Panc1 (cell line): ENCODE measurements at regions of chr7 and their contacts with region 1.

Region 1: DNA sequence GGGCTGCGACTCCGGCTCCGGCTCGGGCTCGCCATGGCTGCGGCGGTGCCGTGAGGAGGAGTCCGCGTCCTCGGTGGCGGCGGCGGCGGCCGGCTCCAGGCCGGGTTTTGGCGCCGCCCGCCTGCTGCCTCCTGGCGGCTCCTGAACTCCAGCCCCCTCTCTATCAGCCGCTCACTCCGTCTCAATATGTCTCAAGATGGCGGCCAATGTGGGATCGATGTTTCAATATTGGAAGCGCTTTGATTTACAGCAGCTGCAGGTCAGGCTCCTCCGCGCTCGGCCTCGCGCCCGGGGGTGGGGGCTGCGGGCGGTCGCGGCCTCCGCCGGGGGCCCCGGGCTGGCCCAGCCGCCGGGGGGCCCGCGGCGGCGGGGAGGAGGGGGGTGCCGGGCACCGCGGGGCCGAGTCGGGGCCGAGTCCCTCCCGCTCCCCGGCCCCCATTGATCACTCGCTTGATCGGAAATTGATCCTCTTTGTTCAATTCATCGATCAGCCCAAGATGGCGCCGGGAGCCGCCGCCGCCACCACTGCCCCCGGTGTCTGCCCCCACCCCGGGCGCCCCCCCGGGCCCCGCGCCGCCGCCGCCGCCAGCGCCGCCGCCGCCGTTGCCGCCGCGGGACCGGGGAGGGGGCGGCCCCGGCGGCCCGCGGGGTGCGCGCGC is 1.5 kb upstream of the CUX1 start:
- DNase-seq: no peak
- ATAC-seq: peak; percentile 82
- H3K4me3 ChIP-seq: peak overlapping the region; percentile 60 to 66
- H3K27ac ChIP-seq: no peak overlapping the region
- H3K4me1 ChIP-seq: peaks cover 28% of the 10 kb centered on the region
- H3K27me3 ChIP-seq: no peaks in the 10 kb centered on the region
- CTCF ChIP-seq: peak; percentile 68

Region 2: GRCh38 chr7:101232141-101232850 is 583.7 kb before region 1 on chr7:
- CTCF ChIA-PET with region 1: no interaction called
- POLR2A ChIA-PET with region 1: no interaction called
- in situ Hi-C with region 1: no loop called
- intact Hi-C with region 1: no loop called
- DNase-seq: no peak
- ATAC-seq: peak; percentile 75
- H3K4me3 ChIP-seq: peak overlapping the region; percentile 42 to 55
- H3K27ac ChIP-seq: peak overlapping the region; percentile 49
- H3K4me1 ChIP-seq: peaks cover 6% of the 10 kb centered on the region; the same call in 1 of the 2 replicates
- H3K27me3 ChIP-seq: no peaks in the 10 kb centered on the region
- CTCF ChIP-seq: no peak

Region 3: DNA sequence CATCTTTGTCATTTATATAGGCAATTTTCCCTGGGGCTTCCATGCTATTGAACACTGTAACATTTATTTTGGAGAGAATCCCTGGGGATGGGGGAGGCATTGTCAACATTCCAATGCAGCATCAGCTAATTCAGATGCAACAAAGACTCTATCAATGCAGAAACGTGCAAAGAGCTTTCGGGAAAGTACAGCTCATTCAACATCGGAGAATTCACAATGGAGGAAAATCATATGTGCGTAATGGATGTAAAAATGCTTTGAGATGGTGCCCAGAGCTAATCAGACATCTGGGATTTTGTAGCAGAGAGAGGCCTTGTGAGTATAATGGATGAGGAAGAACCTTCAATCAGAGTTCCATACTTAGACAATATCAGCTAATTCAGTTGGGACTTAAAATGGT is 542.8 kb before region 1 on chr7:
- CTCF ChIA-PET with region 1: no interaction called
- POLR2A ChIA-PET with region 1: no interaction called
- in situ Hi-C with region 1: no loop called
- intact Hi-C with region 1: no loop called
- DNase-seq: no peak
- ATAC-seq: no peak
- H3K4me3 ChIP-seq: no peak overlapping the region
- H3K27ac ChIP-seq: no peak overlapping the region
- H3K4me1 ChIP-seq: no peaks in the 10 kb centered on the region
- H3K27me3 ChIP-seq: no peaks in the 10 kb centered on the region
- CTCF ChIP-seq: no peak

Region 4: DNA sequence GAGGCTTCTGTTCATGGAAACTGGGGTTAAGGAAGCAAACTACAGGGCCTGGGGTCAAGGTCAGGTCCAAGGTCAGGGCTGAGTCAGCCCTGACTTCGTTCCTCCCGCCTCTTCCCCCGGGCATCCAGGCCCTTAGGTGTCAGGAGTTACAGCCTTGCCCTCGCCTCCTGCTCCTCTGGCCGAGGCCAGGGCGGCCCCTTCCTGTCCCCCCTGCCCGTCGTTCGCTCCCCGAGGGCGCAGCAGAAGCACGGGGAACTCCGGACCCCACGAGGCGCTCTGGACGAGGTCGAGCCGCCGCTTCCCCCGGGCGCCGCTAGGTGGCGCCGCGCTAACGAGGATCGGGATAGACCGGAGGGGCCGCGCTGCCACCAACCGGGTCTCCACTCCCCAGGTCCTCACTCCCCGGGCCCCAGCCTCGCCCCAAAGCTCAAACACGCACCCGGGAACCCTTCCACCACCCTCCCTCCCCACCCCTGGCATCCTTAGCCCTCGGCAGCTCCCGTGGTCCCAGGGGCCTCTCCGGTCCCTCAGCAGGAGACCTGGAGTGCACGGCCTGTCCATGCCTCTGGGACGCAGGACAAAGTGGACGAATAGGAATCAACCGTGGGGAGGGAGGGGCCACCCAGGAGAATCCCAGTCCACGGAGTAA is 127.7 kb before region 1 on chr7:
- CTCF ChIA-PET with region 1: interaction called, 4 read pairs
- POLR2A ChIA-PET with region 1: interaction called, 21 read pairs
- in situ Hi-C with region 1: no loop called
- intact Hi-C with region 1: loop called (anchors 1 kb)
- DNase-seq: no peak
- ATAC-seq: peak; percentile 95
- H3K4me3 ChIP-seq: peak overlapping the region; percentile 31 to 49
- H3K27ac ChIP-seq: peak overlapping the region; percentile 69
- H3K4me1 ChIP-seq: peaks cover 7% of the 10 kb centered on the region; the same call in 1 of the 2 replicates
- H3K27me3 ChIP-seq: no peaks in the 10 kb centered on the region
- CTCF ChIP-seq: peak; percentile 98

Region 5: DNA sequence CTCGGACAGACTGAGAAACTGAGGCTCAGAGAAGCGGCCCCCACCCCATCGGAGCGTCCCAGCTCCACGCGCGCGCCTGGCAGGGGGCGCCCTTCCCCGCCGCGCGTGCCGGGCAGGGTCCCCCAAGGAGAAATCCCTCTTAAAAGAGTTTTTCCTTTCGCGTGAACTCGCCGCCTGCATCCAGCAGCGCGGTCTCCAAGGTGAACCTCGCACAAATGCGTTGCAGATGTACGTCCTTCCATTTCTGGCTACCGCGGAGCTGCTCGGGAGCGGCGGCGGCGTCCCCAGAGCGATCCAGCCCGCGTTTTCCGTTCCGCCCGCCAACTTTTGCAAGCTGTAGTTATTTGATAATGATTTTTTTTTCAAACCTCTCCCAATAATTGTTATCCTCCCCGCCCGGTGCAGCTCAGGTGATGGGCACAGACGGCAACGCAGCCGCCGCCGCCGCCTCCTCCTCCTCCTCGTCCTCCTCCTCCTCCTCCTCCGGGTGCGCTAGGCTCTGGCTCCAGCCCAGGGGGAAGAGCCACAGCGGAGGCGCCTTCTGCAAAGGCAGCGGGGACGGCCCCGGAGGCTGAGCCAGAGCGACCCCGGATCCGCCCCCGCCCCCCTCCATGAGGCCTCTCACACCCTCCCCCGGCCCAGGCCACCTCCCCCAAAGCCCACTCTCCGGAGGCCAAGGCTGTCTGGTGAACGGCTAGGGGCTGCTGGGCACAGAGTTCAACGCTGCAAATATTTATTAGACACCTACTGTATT is 72.5 kb before region 1 on chr7:
- CTCF ChIA-PET with region 1: no interaction called
- POLR2A ChIA-PET with region 1: no interaction called
- in situ Hi-C with region 1: no loop called
- intact Hi-C with region 1: loop called (anchors 2 kb)
- DNase-seq: no peak
- ATAC-seq: peak; percentile 83
- H3K4me3 ChIP-seq: peak overlapping the region; percentile 48 to 62
- H3K27ac ChIP-seq: peak overlapping the region; percentile 71
- H3K4me1 ChIP-seq: peaks cover 35% of the 10 kb centered on the region
- H3K27me3 ChIP-seq: no peaks in the 10 kb centered on the region
- CTCF ChIP-seq: peak; percentile 87; the same call in 1 of the 2 replicates

Region 6: DNA sequence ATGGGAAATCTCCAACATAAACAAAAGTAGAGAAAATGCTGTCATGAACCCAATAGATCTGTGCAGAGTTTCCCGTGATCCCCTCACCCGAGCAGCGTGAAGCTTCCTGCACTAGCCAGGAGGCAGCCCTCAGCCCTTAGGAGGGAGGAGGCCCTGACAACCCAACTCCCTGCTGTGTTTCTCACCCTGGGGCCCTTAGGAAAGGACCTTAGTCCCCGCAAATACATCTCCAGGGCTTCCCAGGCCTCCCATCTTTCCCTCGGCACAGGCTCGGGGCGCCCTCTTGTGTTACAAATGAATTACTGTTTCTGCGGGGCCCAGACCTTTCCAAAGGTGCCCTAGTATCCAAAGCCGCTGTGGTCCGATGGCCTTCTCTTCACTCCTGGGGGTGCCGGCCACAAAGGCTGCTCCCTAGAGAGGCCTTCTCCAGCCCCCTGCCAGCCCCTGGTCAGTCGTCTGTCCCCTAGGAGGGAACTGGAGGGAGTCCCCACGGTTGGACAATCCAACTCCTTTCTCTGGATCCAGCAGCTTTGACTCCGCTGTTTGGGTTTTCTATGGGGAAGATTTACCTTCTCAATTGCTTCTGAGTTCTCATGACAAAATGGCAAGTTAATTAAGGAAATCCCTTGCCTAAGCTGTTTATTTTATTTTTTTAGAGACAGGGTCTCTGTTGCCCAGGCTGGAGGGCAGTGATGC is 420.8 kb after region 1 on chr7:
- CTCF ChIA-PET with region 1: no interaction called
- POLR2A ChIA-PET with region 1: no interaction called
- in situ Hi-C with region 1: no loop called
- intact Hi-C with region 1: loop called (anchors 10 kb)
- DNase-seq: peak; percentile 28
- ATAC-seq: peak; percentile 98
- H3K4me3 ChIP-seq: no peak overlapping the region
- H3K27ac ChIP-seq: no peak overlapping the region
- H3K4me1 ChIP-seq: no peaks in the 10 kb centered on the region
- H3K27me3 ChIP-seq: no peaks in the 10 kb centered on the region
- CTCF ChIP-seq: peak; percentile 96